Heart right ventricle (tissue), 16 donors: ENCODE measurements at regions of chr4 and their contacts with region 1.

Region 1: DNA sequence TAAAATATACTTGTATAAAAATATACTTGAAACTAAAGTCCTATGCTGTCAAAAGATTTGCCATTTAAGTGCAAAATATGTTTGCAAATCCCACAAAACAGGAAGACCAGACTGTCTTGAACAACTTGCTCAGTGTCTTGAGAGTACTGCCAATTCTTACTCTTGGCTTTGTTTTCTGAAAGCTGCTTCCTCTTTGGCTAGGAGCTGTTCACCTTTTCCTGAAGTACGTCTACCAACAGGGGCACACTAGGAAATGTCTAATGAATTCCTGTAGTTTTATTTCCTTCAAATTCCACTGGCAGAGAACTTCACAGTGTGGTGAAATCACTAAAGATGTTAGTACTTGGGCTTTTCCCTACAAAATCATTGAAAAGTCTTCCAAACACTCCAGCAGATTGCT is 46.4 kb upstream of the ABCG2 start:
- DNase-seq: no peak
- ATAC-seq: peak in 2 of 8 donors; percentile 33 to 77
- H3K4me3 ChIP-seq: no peak overlapping the region
- H3K27ac ChIP-seq: no peak overlapping the region
- H3K4me1 ChIP-seq: peaks cover 0 to 6% (median 0%) of the 10 kb centered on the region in 9 donors
- H3K27me3 ChIP-seq: no peaks in the 10 kb centered on the region
- CTCF ChIP-seq: no peak

Region 2: GRCh38 chr4:87856816-87857215 is 348.1 kb before region 1 on chr4:
- intact Hi-C with region 1: loop called in 8 of 10 experiments (anchors 2 to 10 kb)
- DNase-seq: no peak
- ATAC-seq: no peak
- H3K4me3 ChIP-seq: no peak overlapping the region
- H3K27ac ChIP-seq: no peak overlapping the region
- H3K4me1 ChIP-seq: peaks cover 0 to 21% (median 0%) of the 10 kb centered on the region in 9 donors
- H3K27me3 ChIP-seq: no peaks in the 10 kb centered on the region
- CTCF ChIP-seq: no peak

Region 3: DNA sequence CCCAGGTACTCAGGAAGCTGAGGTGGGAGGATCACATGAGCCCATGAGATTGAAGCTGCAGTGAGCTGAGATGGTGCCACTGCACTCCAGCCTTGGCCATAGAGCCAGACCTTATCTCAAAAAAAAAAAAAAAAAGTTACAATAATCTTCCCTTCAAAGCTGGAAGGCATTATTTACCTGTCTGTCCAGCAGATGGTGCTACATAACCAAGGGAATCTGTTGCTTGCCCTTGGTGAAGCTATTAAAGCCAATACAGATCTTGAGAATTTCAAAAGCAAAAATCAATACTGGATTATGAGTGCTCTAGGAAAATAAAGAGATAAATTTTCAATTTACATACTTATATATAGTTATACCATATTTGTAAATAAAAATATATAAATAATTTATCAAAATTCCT is 171.6 kb before region 1 on chr4:
- intact Hi-C with region 1: loop called in 6 of 10 experiments (anchors 2 to 10 kb)
- DNase-seq: peak in 1 of 2 donors; percentile 54
- ATAC-seq: peak in 5 of 8 donors; percentile 29 to 60 (median 47)
- H3K4me3 ChIP-seq: no peak overlapping the region
- H3K27ac ChIP-seq: no peak overlapping the region
- H3K4me1 ChIP-seq: peaks cover 0 to 10% (median under 1%) of the 10 kb centered on the region in 9 donors
- H3K27me3 ChIP-seq: no peaks in the 10 kb centered on the region
- CTCF ChIP-seq: peak; percentile 42 to 82 (median 67)